ENCODE measurements at regions of chr7 and their contacts with region 1.

Region 1: DNA sequence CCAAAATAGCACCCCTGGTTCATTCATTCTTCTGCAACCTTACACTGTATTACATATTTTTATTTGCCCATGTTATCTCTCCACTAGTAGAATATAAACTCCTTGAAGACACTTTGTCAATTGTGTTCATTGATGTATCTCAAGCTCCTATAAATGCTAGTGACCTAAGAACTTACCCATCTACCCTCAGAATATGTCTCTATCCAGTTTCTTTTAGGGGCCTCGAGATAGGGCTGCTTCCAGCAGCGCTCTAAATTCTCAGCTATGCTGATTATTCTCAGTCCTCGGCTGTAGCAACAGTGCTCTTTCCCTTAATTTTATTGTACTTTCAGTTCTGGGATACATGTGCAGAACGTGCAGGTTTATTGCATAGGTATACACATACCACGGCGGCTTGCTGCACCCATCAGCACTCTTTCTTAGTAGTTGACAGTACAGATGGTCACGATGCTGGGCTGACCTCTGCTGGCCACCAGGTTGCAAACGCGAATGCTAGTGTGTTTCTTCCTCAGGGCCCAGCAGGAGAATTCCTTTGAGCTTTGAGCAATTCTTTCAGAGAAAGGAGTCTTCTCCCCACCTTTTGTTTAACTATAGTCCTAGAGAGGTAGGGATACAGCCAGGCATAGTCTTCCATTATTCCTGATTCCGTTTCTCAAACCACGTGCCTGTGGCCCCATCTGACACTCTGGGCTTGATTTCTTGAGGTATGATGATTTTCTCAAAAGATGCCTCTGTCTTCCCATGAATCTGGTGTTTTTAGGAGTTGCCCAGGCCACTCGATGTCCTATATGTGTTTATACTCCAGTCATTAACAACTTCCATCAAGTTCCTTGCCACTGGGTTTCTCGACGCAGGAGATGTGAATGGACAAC is 49.1 kb upstream of the CDC14C start:
- DNase-seq: peak; percentile 41
- H3K4me3 ChIP-seq: no peak overlapping the region
- H3K27ac ChIP-seq: no peak overlapping the region
- H3K4me1 ChIP-seq: no peaks in the 10 kb centered on the region
- H3K27me3 ChIP-seq: no peaks in the 10 kb centered on the region
- CTCF ChIP-seq: peak; percentile 68 to 88

Region 2: GRCh38 chr7:47945261-47946001 is 929.9 kb before region 1 on chr7:
- CTCF ChIA-PET with region 1: no interaction called
- dilution Hi-C with region 1: no loop called
- in situ Hi-C with region 1: no loop called
- intact Hi-C with region 1: loop called (anchors 1 kb)
- DNase-seq: peak; percentile 30
- H3K4me3 ChIP-seq: no peak overlapping the region
- H3K27ac ChIP-seq: no peak overlapping the region
- H3K4me1 ChIP-seq: peaks cover 16% of the 10 kb centered on the region
- H3K27me3 ChIP-seq: no peaks in the 10 kb centered on the region
- CTCF ChIP-seq: peak; percentile 66 to 74

Region 3: GRCh38 chr7:48168159-48168558 is 707.1 kb before region 1 on chr7:
- CTCF ChIA-PET with region 1: no interaction called
- dilution Hi-C with region 1: no loop called
- in situ Hi-C with region 1: no loop called
- intact Hi-C with region 1: loop called (anchors 1 kb)
- DNase-seq: peak; percentile 84
- H3K4me3 ChIP-seq: no peak overlapping the region
- H3K27ac ChIP-seq: no peak overlapping the region
- H3K4me1 ChIP-seq: peaks cover 10% of the 10 kb centered on the region
- H3K27me3 ChIP-seq: no peaks in the 10 kb centered on the region
- CTCF ChIP-seq: peak in 1 of 2 donors; percentile 42

Region 4: DNA sequence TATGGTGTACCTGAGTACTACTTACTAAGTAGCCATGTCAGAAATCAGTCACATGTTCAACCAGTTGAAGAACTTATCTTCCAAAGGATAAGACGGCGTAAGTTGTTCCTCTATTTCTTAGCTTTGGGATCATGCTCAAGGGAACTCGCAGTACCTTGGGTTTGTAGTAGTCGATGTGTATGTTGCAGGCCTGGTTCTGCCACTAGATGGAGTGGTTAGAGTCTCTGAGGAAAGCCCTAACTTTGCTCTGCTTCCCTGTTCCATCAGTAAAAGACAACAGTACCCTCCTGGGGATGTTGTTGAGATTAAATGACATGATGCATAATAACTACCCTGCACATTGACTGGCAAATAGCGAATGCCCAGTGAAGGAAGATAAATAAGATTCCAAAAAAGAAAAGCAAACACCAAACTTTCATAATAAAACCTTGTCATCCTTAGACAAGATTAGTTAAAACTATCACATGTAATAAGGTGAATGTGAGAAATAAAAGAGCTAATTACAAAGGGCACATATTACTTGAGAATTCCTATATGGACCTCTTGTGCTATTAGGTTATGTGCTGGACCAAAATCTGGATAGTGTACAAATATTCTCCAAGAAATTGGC is 538.2 kb before region 1 on chr7:
- CTCF ChIA-PET with region 1: no interaction called
- dilution Hi-C with region 1: no loop called
- in situ Hi-C with region 1: no loop called
- intact Hi-C with region 1: loop called (anchors 1 kb)
- DNase-seq: peak; percentile 28
- H3K4me3 ChIP-seq: no peak overlapping the region
- H3K27ac ChIP-seq: no peak overlapping the region
- H3K4me1 ChIP-seq: no peaks in the 10 kb centered on the region
- H3K27me3 ChIP-seq: no peaks in the 10 kb centered on the region
- CTCF ChIP-seq: peak; percentile 77 to 87

Region 5: GRCh38 chr7:48563334-48563733 is 311.9 kb before region 1 on chr7:
- CTCF ChIA-PET with region 1: no interaction called
- dilution Hi-C with region 1: no loop called
- in situ Hi-C with region 1: no loop called
- intact Hi-C with region 1: no loop called
- DNase-seq: peak; percentile 95
- H3K4me3 ChIP-seq: no peak overlapping the region
- H3K27ac ChIP-seq: no peak overlapping the region
- H3K4me1 ChIP-seq: peaks cover 13% of the 10 kb centered on the region
- H3K27me3 ChIP-seq: no peaks in the 10 kb centered on the region
- CTCF ChIP-seq: no peak

Region 6: DNA sequence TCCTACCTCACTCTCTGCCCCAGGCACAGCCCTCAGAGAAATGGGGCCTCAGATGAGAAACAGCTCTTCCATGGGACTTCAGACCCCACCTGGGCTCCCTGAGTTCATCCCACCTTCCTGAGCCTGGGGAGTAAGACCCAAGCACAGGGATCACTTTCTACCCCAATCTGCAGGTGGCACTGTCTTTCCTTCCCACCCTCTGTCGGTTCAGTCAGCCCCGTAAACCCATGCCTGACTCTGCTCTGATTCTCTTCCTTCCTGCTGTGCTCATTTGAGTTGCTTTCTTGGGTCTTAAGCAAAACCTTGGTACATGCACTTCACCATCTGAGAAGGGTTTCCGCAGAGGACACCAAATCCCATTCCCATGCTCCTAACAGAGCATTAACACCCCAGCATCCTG is 257.3 kb before region 1 on chr7:
- CTCF ChIA-PET with region 1: no interaction called
- dilution Hi-C with region 1: no loop called
- in situ Hi-C with region 1: no loop called
- intact Hi-C with region 1: loop called (anchors 5 kb)
- DNase-seq: no peak
- H3K4me3 ChIP-seq: no peak overlapping the region
- H3K27ac ChIP-seq: no peak overlapping the region
- H3K4me1 ChIP-seq: no peaks in the 10 kb centered on the region
- H3K27me3 ChIP-seq: no peaks in the 10 kb centered on the region
- CTCF ChIP-seq: peak in 1 of 2 donors; percentile 19

Measured in mammary epithelial cell (primary cell).